Mammary epithelial cell (primary cell): ENCODE measurements at regions of chr13 and their contacts with region 1.

Region 1: GRCh38 chr13:78638216-78638615 is 20.7 kb downstream of the OBI1 start:
- DNase-seq: no peak
- H3K4me3 ChIP-seq: no peak overlapping the region
- H3K27ac ChIP-seq: no peak overlapping the region
- H3K4me1 ChIP-seq: no peaks in the 10 kb centered on the region
- H3K27me3 ChIP-seq: no peaks in the 10 kb centered on the region
- CTCF ChIP-seq: no peak

Region 2: DNA sequence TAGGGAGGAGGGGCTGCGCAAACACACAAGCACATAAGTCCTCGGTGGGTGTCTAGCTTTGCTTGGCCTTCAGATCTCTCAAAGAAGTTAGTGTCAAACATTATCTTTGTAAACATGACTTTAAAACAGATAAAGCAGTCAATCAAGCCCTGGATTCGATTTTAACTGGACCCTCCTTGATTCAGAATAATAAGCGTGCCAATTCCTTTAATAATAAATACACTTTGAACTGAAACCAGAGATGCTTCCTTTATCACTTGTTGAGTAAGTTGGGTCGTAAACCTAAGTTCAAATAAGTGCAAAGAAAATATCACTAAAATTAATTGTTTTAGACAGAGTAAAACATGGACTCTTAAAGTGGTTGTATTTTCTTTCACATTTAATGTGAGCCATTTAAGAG is 65.8 kb before region 1 on chr13:
- CTCF ChIA-PET with region 1: no interaction called
- dilution Hi-C with region 1: no loop called
- in situ Hi-C with region 1: no loop called
- intact Hi-C with region 1: loop called (anchors 2 kb)
- DNase-seq: no peak
- H3K4me3 ChIP-seq: no peak overlapping the region
- H3K27ac ChIP-seq: no peak overlapping the region
- H3K4me1 ChIP-seq: no peaks in the 10 kb centered on the region
- H3K27me3 ChIP-seq: peaks cover 8% of the 10 kb centered on the region
- CTCF ChIP-seq: no peak